ENCODE measurements at regions of chr5 and their contacts with region 1.

Region 1: DNA sequence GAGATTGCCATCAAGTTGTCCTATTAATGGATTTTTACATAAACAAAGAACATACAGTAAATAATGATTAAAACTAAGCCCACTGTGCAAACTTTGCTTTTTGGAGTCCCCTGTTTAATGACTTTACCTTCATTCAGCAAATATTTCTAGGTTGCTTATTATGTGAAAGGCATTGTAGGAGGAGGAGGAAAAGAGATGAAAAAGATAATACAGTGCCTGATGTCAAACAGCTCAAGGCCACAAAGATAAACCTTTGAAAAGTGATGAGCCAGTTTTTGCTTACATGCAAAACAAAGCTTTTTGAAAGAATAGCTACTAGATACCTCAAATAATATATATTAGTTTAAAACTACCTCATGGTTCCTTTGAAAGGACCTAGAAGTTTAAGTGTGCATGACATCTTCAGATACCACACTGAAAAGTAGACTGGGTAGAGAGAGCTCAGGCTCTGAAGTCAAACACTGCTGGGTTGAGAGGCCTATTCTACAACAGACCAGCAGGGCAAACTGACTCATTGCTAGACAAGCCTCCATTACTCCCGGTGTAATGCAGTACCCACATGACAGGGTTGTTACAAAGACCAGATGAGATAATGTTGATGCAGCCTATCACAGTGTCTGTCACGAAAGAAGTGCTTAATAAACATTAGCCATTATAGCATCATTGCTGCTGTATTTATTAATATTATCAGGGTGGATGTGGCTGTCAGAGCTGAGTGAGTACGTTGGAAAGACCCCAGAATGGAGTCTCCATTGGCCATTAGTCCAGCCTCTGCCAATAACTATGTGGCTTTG is 11.8 kb downstream of the DEPDC1B start:
- DNase-seq: no peak
- H3K4me3 ChIP-seq: no peak overlapping the region
- H3K27me3 ChIP-seq: no peaks in the 10 kb centered on the region
- CTCF ChIP-seq: peak; percentile 51

Region 2: DNA sequence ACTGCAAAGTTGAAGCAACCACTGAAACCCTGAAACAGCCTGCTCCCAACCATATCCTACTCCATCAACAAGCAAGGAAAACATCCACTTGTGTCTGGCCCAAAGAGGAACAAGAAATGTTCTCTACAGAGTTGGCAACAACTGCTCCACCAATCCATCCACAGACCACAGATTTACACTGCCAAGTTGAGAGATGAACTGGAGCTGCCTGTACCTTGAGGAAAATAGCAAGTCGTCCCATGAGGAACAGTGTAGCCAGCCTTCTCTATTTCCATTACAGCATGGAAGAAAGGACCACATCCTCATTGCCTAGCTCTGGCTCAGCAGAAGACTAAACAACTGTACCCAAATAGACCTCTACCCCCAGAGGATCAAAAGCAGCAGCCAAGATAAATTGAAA is 48.6 kb before region 1 on chr5:
- CTCF ChIA-PET with region 1: no interaction called
- POLR2A ChIA-PET with region 1: no interaction called
- DNase-seq: no peak
- H3K4me3 ChIP-seq: no peak overlapping the region
- H3K27me3 ChIP-seq: no peaks in the 10 kb centered on the region
- CTCF ChIP-seq: no peak

Region 3: GRCh38 chr5:60699530-60700382 is 11.6 kb after region 1 on chr5 and contains the start of gene DEPDC1B:
- CTCF ChIA-PET with region 1: interaction called, 49 read pairs
- POLR2A ChIA-PET with region 1: interaction called, 10 read pairs
- DNase-seq: peak; percentile 37
- H3K4me3 ChIP-seq: peak within 1 kb of the TSS; percentile 91
- H3K27me3 ChIP-seq: peaks cover 2% of the 10 kb centered on the region; the same call in 1 of the 2 replicates
- CTCF ChIP-seq: peak; percentile 56
- polyA plus RNA-seq, gene DEPDC1B: 6.5 and 6.8 TPM in 2 replicates

Measured in BJ (cell line).